ENCODE measurements at regions of chr2 and their contacts with region 1.

Region 1: GRCh38 chr2:164560181-164560792 is 61.0 kb downstream of the GRB14 start:
- DNase-seq: no peak
- H3K4me3 ChIP-seq: peak overlapping the region in 3 of 4 donors; percentile 1 to 22 (median 7)
- H3K27ac ChIP-seq: no peak overlapping the region
- H3K4me1 ChIP-seq: peaks cover 22 to 34% (median 24%) of the 10 kb centered on the region in 4 donors
- H3K27me3 ChIP-seq: no peaks in the 10 kb centered on the region
- CTCF ChIP-seq: peak; percentile 68 to 80 (median 78)
- EP300 ChIP-seq: no peak
- POLR2A ChIP-seq: no peak

Region 2: GRCh38 chr2:164599966-164600589 is 39.8 kb after region 1 on chr2:
- intact Hi-C with region 1: loop called (anchors 5 kb)
- DNase-seq: no peak
- H3K4me3 ChIP-seq: no peak overlapping the region
- H3K27ac ChIP-seq: no peak overlapping the region
- H3K4me1 ChIP-seq: peaks cover 0 to 15% (median 9%) of the 10 kb centered on the region in 4 donors
- H3K27me3 ChIP-seq: no peaks in the 10 kb centered on the region
- CTCF ChIP-seq: peak; percentile 53 to 58 (median 56)
- EP300 ChIP-seq: no peak
- POLR2A ChIP-seq: no peak

Region 3: DNA sequence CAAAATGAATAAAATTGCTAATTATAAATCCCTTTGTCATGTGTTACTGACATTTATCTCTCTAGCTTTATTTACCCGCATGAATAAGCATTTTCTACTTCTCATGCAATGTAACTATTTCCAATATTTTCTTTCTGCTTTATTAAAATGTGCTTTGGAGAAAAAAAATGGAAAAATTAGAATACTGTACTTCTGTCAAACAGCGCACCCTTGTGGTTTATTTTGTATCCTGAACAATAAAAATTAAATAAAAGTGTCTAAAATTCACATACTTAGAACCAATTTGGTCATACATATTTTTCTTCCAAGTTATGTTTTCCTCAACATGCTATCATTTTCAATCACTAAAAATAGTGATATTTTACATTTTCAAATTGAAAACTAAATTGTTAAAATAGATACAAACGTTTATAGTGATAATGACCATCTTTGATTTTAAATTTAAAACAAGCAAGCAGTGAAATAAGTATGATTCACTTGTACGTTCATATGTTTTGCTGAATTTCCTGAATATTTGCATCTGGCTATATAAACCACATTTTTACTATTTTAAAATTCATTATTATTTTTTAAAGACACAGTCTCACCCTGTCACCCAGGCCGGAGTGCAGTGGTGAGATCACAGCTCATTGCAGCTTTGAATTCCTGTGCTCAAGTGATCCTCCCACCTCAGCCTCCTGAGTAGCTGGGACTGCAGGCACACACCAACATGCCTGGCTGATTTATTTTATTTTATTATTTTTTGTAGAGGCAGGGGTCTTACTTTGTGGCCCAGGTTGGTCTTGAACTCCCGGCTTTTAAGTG is 156.9 kb after region 1 on chr2:
- intact Hi-C with region 1: loop called (anchors 2 kb)
- DNase-seq: no peak
- H3K4me3 ChIP-seq: no peak overlapping the region
- H3K27ac ChIP-seq: no peak overlapping the region
- H3K4me1 ChIP-seq: peaks cover 3 to 10% (median 7%) of the 10 kb centered on the region in 4 donors
- H3K27me3 ChIP-seq: no peaks in the 10 kb centered on the region
- CTCF ChIP-seq: peak; percentile 37 to 72 (median 64)
- EP300 ChIP-seq: no peak
- POLR2A ChIP-seq: no peak

Measured in esophagus muscularis mucosa (tissue), 4 donors.